Activated CD8-positive, alpha-beta T cell treated with anti-CD3 and anti-CD28 coated beads, Interleukin-2, amount 10 ng/mL, durations not matched to agents 7 days and 5 days (primary cell): ENCODE measurements at regions of chrX and their contacts with region 1.

Region 1: GRCh38 chrX:154748712-154749343 is 2.0 kb downstream of the GAB3 start:
- DNase-seq: peak; percentile 58
- ATAC-seq: peak; percentile 69
- H3K4me3 Mint-ChIP-seq: peak overlapping the region; percentile 65
- H3K27ac Mint-ChIP-seq: no peak overlapping the region
- H3K4me1 Mint-ChIP-seq: peaks cover 37% of the 10 kb centered on the region
- H3K27me3 Mint-ChIP-seq: peaks cover 11% of the 10 kb centered on the region

Region 2: GRCh38 chrX:154712781-154713740 is 35.8 kb before region 1 on chrX:
- CTCF ChIA-PET with region 1: interaction called, 104 read pairs
- POLR2A ChIA-PET with region 1: interaction called, 4 read pairs
- DNase-seq: peak; percentile 55
- ATAC-seq: peak; percentile 92
- H3K4me3 Mint-ChIP-seq: peak overlapping the region; percentile 50
- H3K27ac Mint-ChIP-seq: peak overlapping the region; percentile 82
- H3K4me1 Mint-ChIP-seq: peaks cover 62% of the 10 kb centered on the region
- H3K27me3 Mint-ChIP-seq: no peaks in the 10 kb centered on the region

Region 3: GRCh38 chrX:154727871-154728270 is 21.0 kb before region 1 on chrX:
- CTCF ChIA-PET with region 1: interaction called, 163 read pairs
- POLR2A ChIA-PET with region 1: interaction called, 6 read pairs
- DNase-seq: no peak
- ATAC-seq: no peak
- H3K4me3 Mint-ChIP-seq: no peak overlapping the region
- H3K27ac Mint-ChIP-seq: no peak overlapping the region
- H3K4me1 Mint-ChIP-seq: peaks cover 98% of the 10 kb centered on the region
- H3K27me3 Mint-ChIP-seq: no peaks in the 10 kb centered on the region

Region 4: GRCh38 chrX:154734061-154734781 is 14.6 kb before region 1 on chrX:
- CTCF ChIA-PET with region 1: interaction called, 163 read pairs
- POLR2A ChIA-PET with region 1: interaction called, 6 read pairs
- DNase-seq: peak; percentile 59
- ATAC-seq: peak; percentile 78
- H3K4me3 Mint-ChIP-seq: peak overlapping the region; percentile 70
- H3K27ac Mint-ChIP-seq: peak overlapping the region; percentile 96
- H3K4me1 Mint-ChIP-seq: peaks cover 97% of the 10 kb centered on the region
- H3K27me3 Mint-ChIP-seq: no peaks in the 10 kb centered on the region

Region 5: GRCh38 chrX:154762523-154763289 is 13.9 kb after region 1 on chrX and contains the start of gene DKC1:
- CTCF ChIA-PET with region 1: interaction called, 28 read pairs
- POLR2A ChIA-PET with region 1: interaction called, 29 read pairs
- DNase-seq: peak; percentile 96
- ATAC-seq: peak; percentile 94
- H3K4me3 Mint-ChIP-seq: peak within 1 kb of the TSS; percentile 88
- H3K27ac Mint-ChIP-seq: peak within 1 kb of the TSS; percentile 94
- H3K4me1 Mint-ChIP-seq: peaks cover 29% of the 10 kb centered on the region
- H3K27me3 Mint-ChIP-seq: no peaks in the 10 kb centered on the region
- total RNA-seq, gene DKC1: 76.0 to 82.8 TPM

Region 6: DNA sequence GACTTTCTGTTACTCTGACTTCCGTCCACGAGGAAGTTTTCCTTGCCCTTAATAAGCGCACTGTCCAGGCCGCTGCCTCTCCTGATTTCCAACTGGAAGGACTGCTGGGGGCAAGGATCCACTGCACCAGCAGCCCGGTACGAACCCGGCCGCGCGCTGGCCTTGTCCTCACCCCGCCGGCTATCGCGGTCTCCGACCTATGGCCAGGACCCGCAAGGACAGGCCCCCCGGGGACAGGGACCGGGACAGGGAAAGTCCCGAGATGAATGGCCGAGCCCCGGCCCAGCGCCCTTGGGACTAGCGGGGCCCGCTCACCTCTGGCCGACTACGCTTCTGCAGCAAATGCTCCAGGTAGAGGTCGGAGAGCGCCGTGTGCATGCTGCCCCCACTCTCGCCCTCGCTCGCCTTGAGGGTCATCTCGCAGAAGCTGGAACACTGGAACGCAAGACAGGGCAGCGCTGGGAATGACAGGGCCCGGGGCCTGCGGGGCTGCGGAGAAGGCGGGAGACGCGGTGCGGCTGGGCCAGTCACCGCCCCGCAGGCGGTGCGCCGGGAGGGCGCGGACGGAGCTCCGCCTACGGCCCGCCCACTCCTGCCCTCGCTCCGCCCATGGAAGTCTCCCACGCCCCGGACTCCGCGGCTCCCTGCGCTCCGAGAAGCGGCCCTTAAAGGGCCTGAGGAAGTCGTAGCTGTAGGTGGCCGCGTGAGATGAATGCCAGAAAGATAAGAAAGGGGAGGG is 56.3 kb after region 1 on chrX and contains the start of gene MPP1:
- CTCF ChIA-PET with region 1: interaction called, 14 read pairs
- POLR2A ChIA-PET with region 1: no interaction called
- DNase-seq: peak; percentile 79
- ATAC-seq: peak; percentile 93
- H3K4me3 Mint-ChIP-seq: peak within 1 kb of the TSS; percentile 85
- H3K27ac Mint-ChIP-seq: peak within 1 kb of the TSS; percentile 76
- H3K4me1 Mint-ChIP-seq: peaks cover 55% of the 10 kb centered on the region
- H3K27me3 Mint-ChIP-seq: peaks cover 2% of the 10 kb centered on the region
- total RNA-seq, gene MPP1: 69.4 to 72.6 TPM

Region 7: DNA sequence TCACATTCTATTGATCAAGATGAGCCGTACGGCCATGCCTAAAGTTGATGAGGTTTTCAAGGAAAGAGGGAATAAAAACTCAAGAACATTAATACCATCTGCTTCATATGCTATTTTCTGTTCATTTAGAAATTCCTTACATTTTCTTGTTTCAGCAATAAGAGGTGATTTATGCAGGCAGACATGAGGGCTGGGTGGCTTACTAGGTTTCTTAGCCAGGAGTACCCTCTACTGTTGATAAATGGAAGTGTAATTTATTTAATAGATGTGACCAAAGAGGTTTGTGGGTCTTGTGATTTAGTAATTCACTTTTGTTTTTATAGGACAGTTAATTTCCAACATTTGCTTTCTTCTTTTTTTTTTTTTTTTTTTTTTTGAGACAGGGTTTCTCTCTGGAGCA is 92.0 kb after region 1 on chrX:
- CTCF ChIA-PET with region 1: interaction called, 26 read pairs
- POLR2A ChIA-PET with region 1: no interaction called
- DNase-seq: peak; percentile 28
- ATAC-seq: peak; percentile 64
- H3K4me3 Mint-ChIP-seq: no peak overlapping the region
- H3K27ac Mint-ChIP-seq: no peak overlapping the region
- H3K4me1 Mint-ChIP-seq: peaks cover 12% of the 10 kb centered on the region
- H3K27me3 Mint-ChIP-seq: peaks cover 3% of the 10 kb centered on the region

Region 8: DNA sequence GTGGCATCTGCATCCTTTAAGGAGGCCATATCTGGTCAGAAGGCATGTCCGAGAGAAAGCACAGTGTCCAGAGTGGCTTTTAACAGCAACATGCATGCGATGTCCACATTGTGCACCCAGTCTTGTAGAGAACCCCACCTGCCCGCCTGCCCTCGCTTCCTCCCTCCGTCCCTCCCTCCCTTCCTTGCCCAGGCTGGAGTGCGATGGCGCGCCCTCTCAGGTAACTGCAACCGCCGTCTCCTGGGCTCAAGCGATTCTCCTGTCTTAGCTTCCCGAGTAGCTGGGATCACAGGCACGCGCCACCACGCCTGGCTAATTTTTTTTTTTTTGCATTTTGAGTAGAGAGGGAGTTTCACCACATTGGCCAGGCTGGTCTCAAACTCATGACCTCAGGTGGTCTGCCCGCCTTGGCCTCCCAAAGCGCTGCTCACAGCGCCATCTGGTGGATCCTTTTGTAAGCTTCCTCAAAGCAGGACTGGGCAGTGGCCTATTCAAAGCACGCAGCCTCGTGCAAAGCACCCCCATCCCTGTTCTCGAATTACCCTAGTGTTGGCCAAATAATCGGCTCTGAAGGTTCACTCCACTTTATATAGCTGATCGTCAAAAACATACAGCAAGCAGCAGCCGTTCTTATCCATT is 337.5 kb after region 1 on chrX:
- CTCF ChIA-PET with region 1: no interaction called
- POLR2A ChIA-PET with region 1: no interaction called
- DNase-seq: peak; percentile 45
- ATAC-seq: peak; percentile 64
- H3K4me3 Mint-ChIP-seq: no peak overlapping the region
- H3K27ac Mint-ChIP-seq: no peak overlapping the region
- H3K4me1 Mint-ChIP-seq: no peaks in the 10 kb centered on the region
- H3K27me3 Mint-ChIP-seq: no peaks in the 10 kb centered on the region